MCF 10A (cell line): ENCODE measurements at regions of chr1 and their contacts with region 1.

Region 1: GRCh38 chr1:27321813-27322577 is at the start of gene TMEM222:
- DNase-seq: peak; percentile 96
- H3K4me3 Mint-ChIP-seq: peak within 1 kb of the TSS; percentile 91
- H3K27ac Mint-ChIP-seq: peak within 1 kb of the TSS; percentile 94
- H3K4me1 Mint-ChIP-seq: peaks cover 5% of the 10 kb centered on the region
- H3K27me3 Mint-ChIP-seq: no peaks in the 10 kb centered on the region
- CTCF ChIP-seq: no peak
- total RNA-seq, gene TMEM222: 36.9 and 38.3 TPM in 2 replicates

Region 2: GRCh38 chr1:27257155-27257554 is 64.8 kb before region 1 on chr1:
- CTCF ChIA-PET with region 1: no interaction called
- POLR2A ChIA-PET with region 1: no interaction called
- intact Hi-C with region 1: no loop called
- DNase-seq: no peak
- H3K4me3 Mint-ChIP-seq: no peak overlapping the region
- H3K27ac Mint-ChIP-seq: no peak overlapping the region
- H3K4me1 Mint-ChIP-seq: no peaks in the 10 kb centered on the region
- H3K27me3 Mint-ChIP-seq: no peaks in the 10 kb centered on the region
- CTCF ChIP-seq: no peak

Region 3: DNA sequence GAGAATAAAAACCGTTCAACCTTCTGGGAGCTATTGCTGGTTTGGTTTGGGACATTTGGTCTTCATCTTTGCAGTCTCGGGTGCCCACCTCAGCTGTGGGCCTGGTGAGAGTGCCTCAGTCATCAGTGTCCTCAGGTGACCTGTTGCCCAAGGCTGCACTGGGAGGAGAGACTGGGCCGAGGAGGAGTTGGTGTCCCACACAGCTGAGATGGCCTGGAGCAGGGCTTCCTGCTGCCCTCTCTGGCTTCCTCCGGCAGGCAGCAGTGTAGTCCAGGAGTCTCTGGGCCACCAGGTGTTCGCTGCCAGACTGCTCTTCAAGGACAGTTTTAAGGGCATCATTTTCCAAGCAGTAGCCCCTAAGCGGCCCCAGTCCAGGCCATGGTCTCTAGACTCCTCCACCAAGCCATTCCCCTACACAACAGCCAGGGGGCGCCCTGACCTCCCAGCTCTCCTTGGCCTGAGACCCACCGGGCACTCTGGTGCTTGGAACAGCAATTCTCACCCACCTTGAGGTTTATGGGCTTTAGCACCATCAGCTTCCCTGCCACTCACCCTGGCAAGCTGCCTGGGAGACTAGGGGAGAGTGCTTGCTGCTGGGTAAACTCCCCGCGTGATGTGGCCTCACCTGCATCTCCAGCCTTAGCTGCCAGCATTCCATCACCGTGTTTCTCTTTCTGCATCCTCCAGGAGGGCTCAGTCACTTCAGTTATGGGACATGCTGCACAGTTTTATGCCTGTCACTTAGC is 10.7 kb after region 1 on chr1:
- CTCF ChIA-PET with region 1: interaction called, 36 read pairs
- POLR2A ChIA-PET with region 1: interaction called, 8 read pairs
- intact Hi-C with region 1: no loop called
- DNase-seq: peak; percentile 56
- H3K4me3 Mint-ChIP-seq: no peak overlapping the region
- H3K27ac Mint-ChIP-seq: peak overlapping the region; percentile 35
- H3K4me1 Mint-ChIP-seq: peaks cover 9% of the 10 kb centered on the region
- H3K27me3 Mint-ChIP-seq: no peaks in the 10 kb centered on the region
- CTCF ChIP-seq: peak; percentile 75

Region 4: GRCh38 chr1:27341525-27342252 is 19.7 kb after region 1 on chr1 and contains the start of gene SYTL1:
- CTCF ChIA-PET with region 1: interaction called, 6 read pairs
- POLR2A ChIA-PET with region 1: interaction called, 49 read pairs
- intact Hi-C with region 1: loop called (anchors 1 kb)
- DNase-seq: peak; percentile 89
- H3K4me3 Mint-ChIP-seq: peak within 1 kb of the TSS; percentile 82
- H3K27ac Mint-ChIP-seq: peak within 1 kb of the TSS; percentile 95
- H3K4me1 Mint-ChIP-seq: peaks cover 46% of the 10 kb centered on the region
- H3K27me3 Mint-ChIP-seq: no peaks in the 10 kb centered on the region
- CTCF ChIP-seq: no peak
- total RNA-seq, gene SYTL1: 64.8 and 81.8 TPM in 2 replicates